CD4-positive, alpha-beta memory T cell (primary cell): ENCODE measurements at regions of chr13 and their contacts with region 1.

Region 1: DNA sequence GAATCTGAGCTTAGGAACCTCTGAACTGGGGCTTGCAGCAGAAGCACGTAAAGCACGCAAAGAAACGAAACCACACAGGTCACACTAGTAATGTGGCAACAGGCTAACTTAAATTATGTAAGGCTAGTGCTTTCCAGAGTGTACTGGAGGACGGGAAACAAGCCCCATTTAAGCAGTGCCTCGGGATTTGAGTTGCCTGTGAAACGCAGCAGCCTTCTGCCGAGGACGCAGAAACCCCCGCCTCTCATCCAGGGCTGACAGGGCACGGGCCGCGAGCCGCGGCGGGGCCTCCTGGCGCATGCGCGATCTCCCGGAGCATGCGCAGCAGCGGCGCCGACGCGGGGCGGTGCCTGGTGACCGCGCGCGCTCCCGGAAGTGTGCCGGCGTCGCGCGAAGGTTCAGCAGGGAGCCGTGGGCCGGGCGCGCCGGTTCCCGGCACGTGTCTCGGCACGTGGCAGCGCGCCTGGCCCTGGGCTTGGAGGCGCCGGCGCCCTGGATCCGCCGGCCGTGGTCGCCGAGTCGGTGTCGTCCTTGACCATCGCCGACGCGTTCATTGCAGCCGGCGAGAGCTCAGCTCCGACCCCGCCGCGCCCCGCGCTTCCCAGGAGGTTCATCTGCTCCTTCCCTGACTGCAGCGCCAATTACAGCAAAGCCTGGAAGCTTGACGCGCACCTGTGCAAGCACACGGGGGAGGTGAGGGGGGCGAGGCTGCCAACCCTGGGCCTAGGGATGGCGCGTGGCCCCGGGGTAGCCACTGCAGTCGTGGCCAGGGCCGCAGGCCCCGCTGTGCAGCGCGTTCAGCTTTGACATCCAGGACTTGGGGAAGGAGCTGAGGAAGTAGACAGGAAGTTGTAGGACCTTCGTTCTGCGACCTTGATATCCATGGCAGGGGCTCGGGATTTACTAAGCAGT is at the start of gene GTF3A:
- DNase-seq: peak; percentile 85 to 96 (median 92)
- H3K4me3 ChIP-seq: peak within 1 kb of the TSS; percentile 66 to 89
- H3K4me3 Mint-ChIP-seq: peak within 1 kb of the TSS; percentile 87 to 96 (median 94)
- H3K27ac ChIP-seq: peak within 1 kb of the TSS; percentile 95
- H3K27ac Mint-ChIP-seq: peak within 1 kb of the TSS; percentile 89 to 99 (median 97)
- H3K4me1 ChIP-seq: peaks cover 51% of the 10 kb centered on the region
- H3K4me1 Mint-ChIP-seq: peaks cover 27 to 53% (median 40%) of the 10 kb centered on the region in 4 donors
- H3K27me3 ChIP-seq: no peaks in the 10 kb centered on the region
- H3K27me3 Mint-ChIP-seq: no peaks in the 10 kb centered on the region
- total RNA-seq, gene GTF3A: 225 to 236 TPM

Region 2: GRCh38 chr13:26253787-26254582 is 1170.5 kb before region 1 on chr13 and contains the start of gene CDK8:
- CTCF ChIA-PET with region 1: no interaction called
- POLR2A ChIA-PET with region 1: no interaction called
- intact Hi-C with region 1: loop called (anchors 10 kb)
- DNase-seq: peak; percentile 91 to 95 (median 92)
- H3K4me3 ChIP-seq: peak within 1 kb of the TSS; percentile 55 to 87
- H3K4me3 Mint-ChIP-seq: peak within 1 kb of the TSS; percentile 91 to 100 (median 94)
- H3K27ac ChIP-seq: peak within 1 kb of the TSS; percentile 58
- H3K27ac Mint-ChIP-seq: peak within 1 kb of the TSS; percentile 86 to 99 (median 93)
- H3K4me1 ChIP-seq: peaks cover 18% of the 10 kb centered on the region
- H3K4me1 Mint-ChIP-seq: peaks cover 29 to 44% (median 30%) of the 10 kb centered on the region in 4 donors
- H3K27me3 ChIP-seq: no peaks in the 10 kb centered on the region
- H3K27me3 Mint-ChIP-seq: peaks cover 0 to 1% of the 10 kb centered on the region in 2 donors
- total RNA-seq, gene CDK8: 10.4 to 11.7 TPM

Region 3: DNA sequence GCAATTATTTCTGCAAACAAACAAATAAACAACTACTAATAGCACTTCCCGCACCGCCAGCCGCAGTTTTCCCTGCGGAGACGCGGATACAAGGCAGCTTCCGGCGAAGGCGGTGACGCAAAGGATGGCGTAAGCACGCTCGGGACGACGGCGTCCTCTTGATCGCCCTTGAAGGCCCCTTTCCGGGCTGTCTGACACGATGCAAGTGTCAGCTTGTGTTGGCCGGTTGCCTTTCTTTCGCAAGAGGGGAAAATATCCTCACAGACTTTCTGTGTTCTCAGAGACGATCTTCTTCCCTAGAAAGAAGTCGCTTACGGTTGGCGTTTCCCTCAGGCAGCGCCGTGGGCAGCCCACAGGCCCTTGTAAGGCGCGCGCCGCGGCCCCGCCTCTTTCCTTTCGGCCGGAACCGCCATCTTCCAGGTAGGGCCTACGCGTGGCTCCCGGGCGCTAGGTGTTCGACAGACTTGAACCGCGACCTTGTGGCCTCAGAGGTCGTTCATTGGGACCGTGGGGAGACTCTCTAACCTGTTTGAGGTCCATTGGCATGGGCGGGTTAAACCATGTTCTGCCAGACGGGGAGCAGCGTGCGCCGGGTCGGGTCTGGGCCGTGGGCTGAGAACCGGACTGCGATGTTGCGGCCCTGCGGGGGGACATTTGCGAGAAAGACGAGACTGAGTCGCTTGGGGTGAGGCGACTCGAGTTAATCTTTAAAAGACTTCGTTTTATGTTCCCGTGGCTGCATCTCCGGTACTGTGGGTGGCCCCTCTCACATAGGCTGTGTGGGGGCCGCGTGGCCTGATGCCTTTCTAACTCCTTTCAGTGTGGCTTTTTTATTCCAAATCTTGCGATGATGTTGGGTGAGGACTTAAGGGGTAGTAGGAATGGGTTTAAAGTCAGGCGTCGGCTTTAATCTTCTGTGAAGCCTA is 173.1 kb before region 1 on chr13 and contains the start of gene RPL21:
- CTCF ChIA-PET with region 1: no interaction called
- POLR2A ChIA-PET with region 1: interaction called, 9 read pairs
- intact Hi-C with region 1: loop called (anchors 1 kb)
- DNase-seq: peak; percentile 92 to 95 (median 93)
- H3K4me3 ChIP-seq: peak within 1 kb of the TSS; percentile 84 to 98
- H3K4me3 Mint-ChIP-seq: peak within 1 kb of the TSS; percentile 93 to 99 (median 96)
- H3K27ac ChIP-seq: peak within 1 kb of the TSS; percentile 99
- H3K27ac Mint-ChIP-seq: peak within 1 kb of the TSS; percentile 98 to 100 (median 100)
- H3K4me1 ChIP-seq: peaks cover 44% of the 10 kb centered on the region
- H3K4me1 Mint-ChIP-seq: peaks cover 34 to 74% (median 54%) of the 10 kb centered on the region in 4 donors
- H3K27me3 ChIP-seq: no peaks in the 10 kb centered on the region
- H3K27me3 Mint-ChIP-seq: no peaks in the 10 kb centered on the region
- total RNA-seq, gene RPL21: 2,008 to 2,177 TPM

Region 4: GRCh38 chr13:27406178-27406939 is 18.1 kb before region 1 on chr13:
- CTCF ChIA-PET with region 1: interaction called, 11 read pairs
- POLR2A ChIA-PET with region 1: interaction called, 28 read pairs
- intact Hi-C with region 1: loop called (anchors 1 kb)
- DNase-seq: peak; percentile 49 to 60 (median 56)
- H3K4me3 ChIP-seq: no peak overlapping the region
- H3K4me3 Mint-ChIP-seq: peak overlapping the region in 1 of 8 donors; percentile 71
- H3K27ac ChIP-seq: no peak overlapping the region
- H3K27ac Mint-ChIP-seq: no peak overlapping the region
- H3K4me1 ChIP-seq: peaks cover 3% of the 10 kb centered on the region
- H3K4me1 Mint-ChIP-seq: peaks cover 2 to 6% (median 4%) of the 10 kb centered on the region in 4 donors
- H3K27me3 ChIP-seq: no peaks in the 10 kb centered on the region
- H3K27me3 Mint-ChIP-seq: peaks cover 10 to 13% of the 10 kb centered on the region in 2 donors

Region 5: DNA sequence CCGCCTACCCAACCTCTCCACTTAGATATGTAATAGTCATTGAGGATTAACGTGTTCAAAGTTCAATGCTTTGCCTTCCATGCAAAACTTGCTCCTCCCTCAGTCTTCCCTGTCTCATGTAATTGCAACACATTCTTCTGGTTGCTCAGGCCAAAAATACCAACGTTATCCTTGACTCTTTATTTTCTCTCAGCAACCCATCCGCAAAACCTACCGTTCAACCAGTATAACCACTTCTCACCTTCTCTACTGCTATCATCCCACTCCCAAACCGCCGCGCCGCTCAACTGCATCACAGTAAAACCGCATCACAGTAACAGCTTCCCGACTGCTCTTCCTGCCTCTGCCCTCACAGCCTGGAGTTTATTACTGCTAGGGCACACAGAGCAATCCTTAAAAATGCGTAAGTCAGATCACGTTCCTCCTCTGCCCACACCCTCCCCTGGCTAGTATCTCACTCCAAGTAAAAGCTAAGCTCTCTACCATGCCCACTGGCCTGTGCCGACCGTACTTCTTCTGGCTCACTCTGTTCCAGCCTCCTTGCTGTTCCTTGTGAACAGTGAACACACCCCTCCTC is 17.7 kb after region 1 on chr13:
- CTCF ChIA-PET with region 1: interaction called, 109 read pairs
- POLR2A ChIA-PET with region 1: interaction called, 588 read pairs
- intact Hi-C with region 1: loop called (anchors 1 kb)
- DNase-seq: peak; percentile 32 to 63 (median 39)
- H3K4me3 ChIP-seq: peak overlapping the region in 1 of 2 donors; percentile 43
- H3K4me3 Mint-ChIP-seq: peak overlapping the region; percentile 53 to 85 (median 73)
- H3K27ac ChIP-seq: peak overlapping the region; percentile 19
- H3K27ac Mint-ChIP-seq: peak overlapping the region; percentile 76 to 93 (median 90)
- H3K4me1 ChIP-seq: peaks cover 67% of the 10 kb centered on the region
- H3K4me1 Mint-ChIP-seq: peaks cover 40 to 80% (median 59%) of the 10 kb centered on the region in 4 donors
- H3K27me3 ChIP-seq: no peaks in the 10 kb centered on the region
- H3K27me3 Mint-ChIP-seq: no peaks in the 10 kb centered on the region

Region 6: DNA sequence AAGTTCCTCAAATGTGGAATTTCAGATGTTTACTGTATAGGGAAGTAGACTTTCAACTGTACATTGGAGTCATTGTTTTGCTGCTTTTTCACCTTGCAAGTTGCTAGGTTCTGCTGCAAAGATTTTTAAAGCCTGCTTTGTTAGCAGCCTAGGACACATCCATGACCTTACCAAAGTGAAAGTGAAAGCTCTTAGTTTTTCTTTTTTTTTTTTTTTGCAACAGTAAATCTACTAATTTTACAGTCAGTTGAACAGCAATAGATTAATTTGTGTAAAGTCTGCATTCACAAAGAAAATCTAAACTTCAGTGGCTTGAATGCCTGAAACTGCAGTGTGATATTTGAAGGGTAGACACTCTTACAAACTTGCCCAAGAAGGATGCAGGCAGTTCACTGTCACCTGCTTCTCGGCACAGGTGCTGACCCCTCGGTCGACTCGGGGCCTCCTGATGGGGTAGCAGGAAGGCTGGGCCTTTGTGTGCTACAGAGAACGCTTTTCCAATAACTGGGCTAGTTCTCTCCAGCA is 30.9 kb after region 1 on chr13:
- CTCF ChIA-PET with region 1: interaction called, 109 read pairs
- POLR2A ChIA-PET with region 1: interaction called, 588 read pairs
- intact Hi-C with region 1: loop called (anchors 1 kb)
- DNase-seq: peak in 4 of 5 donors; percentile 33 to 40 (median 36)
- H3K4me3 ChIP-seq: peak overlapping the region; percentile 48 to 59
- H3K4me3 Mint-ChIP-seq: peak overlapping the region; percentile 89 to 98 (median 94)
- H3K27ac ChIP-seq: peak overlapping the region; percentile 73
- H3K27ac Mint-ChIP-seq: peak overlapping the region; percentile 96 to 99 (median 98)
- H3K4me1 ChIP-seq: peaks cover 32% of the 10 kb centered on the region
- H3K4me1 Mint-ChIP-seq: peaks cover 16 to 44% (median 29%) of the 10 kb centered on the region in 4 donors
- H3K27me3 ChIP-seq: no peaks in the 10 kb centered on the region
- H3K27me3 Mint-ChIP-seq: peaks cover 0 to 2% of the 10 kb centered on the region in 2 donors

Region 7: DNA sequence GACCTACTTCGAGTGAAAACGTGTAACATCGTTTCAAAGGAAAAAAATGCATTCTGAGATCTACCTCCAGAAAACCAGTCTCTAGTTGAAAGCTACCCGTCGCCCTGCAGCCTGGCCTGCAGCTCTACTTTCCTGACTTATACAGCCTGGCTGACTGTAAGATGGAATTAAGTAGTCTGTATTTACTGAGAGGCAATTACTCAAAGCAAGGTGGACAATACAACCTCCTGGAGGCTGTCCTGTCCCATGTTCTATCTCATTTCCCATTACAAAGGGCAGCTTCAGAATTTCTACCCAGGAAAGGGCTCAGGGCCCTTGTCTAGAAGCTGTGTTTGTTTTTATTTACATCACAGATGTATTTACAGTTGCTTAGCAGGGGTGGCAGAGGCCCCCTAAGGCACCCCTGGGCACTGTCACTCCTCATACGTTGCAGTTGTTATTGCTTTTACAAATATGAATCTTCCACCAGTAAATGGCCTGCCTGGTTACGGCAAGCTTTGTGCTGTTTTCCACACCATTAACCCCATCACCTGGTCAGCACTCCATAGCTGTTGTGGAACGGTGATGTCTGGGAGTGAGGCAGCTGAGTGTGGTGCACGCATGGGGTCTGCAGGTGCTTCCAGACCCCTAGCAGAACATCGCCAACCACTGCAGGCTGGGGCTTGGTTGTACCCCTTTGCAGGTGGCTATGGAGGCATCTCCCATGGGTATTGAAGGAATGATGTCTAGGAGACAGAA is 72.2 kb after region 1 on chr13:
- CTCF ChIA-PET with region 1: no interaction called
- POLR2A ChIA-PET with region 1: no interaction called
- intact Hi-C with region 1: no loop called
- DNase-seq: no peak
- H3K4me3 ChIP-seq: no peak overlapping the region
- H3K4me3 Mint-ChIP-seq: no peak overlapping the region
- H3K27ac ChIP-seq: no peak overlapping the region
- H3K27ac Mint-ChIP-seq: no peak overlapping the region
- H3K4me1 ChIP-seq: no peaks in the 10 kb centered on the region
- H3K4me1 Mint-ChIP-seq: no peaks in the 10 kb centered on the region
- H3K27me3 ChIP-seq: no peaks in the 10 kb centered on the region
- H3K27me3 Mint-ChIP-seq: peaks cover 0 to 4% of the 10 kb centered on the region in 2 donors

Region 8: GRCh38 chr13:27868641-27869435 is 444.3 kb after region 1 on chr13:
- CTCF ChIA-PET with region 1: no interaction called
- POLR2A ChIA-PET with region 1: no interaction called
- intact Hi-C with region 1: no loop called
- DNase-seq: no peak
- H3K4me3 ChIP-seq: no peak overlapping the region
- H3K4me3 Mint-ChIP-seq: no peak overlapping the region
- H3K27ac ChIP-seq: no peak overlapping the region
- H3K27ac Mint-ChIP-seq: peak overlapping the region in 1 of 7 donors; percentile 16
- H3K4me1 ChIP-seq: no peaks in the 10 kb centered on the region
- H3K4me1 Mint-ChIP-seq: no peaks in the 10 kb centered on the region
- H3K27me3 ChIP-seq: no peaks in the 10 kb centered on the region
- H3K27me3 Mint-ChIP-seq: peaks cover 7 to 18% of the 10 kb centered on the region in 2 donors